ENCODE measurements at regions of chr21 and their contacts with region 1.

Region 1: DNA sequence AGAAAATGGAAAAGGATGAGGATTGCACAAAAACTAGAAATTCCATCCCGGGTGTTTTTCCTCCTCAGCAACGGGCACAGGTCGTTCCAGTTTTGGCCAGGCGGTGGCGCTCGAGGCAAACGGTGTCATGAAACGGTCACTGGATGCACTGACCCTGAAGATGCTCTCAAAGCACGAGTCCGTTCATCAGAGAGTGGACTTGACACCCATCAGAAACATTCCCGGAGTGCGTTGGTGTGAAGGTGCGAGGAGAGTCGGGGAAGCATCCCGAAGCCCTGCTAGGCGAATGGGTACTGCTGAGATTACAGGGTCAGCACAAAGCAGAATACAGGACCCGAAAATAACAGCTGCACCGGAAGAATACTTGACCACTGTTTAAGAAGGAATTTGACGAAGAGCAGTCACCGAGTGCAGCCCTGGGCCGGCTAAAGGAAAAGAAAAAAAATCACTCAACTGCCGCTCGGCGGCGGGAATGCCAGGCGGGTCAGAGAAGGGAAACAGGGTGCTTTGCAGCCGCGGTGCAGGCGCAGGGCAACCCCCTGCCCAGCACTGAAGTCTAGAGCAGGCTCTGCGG is 71.7 kb upstream of the ETS2 start:
- DNase-seq: peak; percentile 90 to 93
- ATAC-seq: peak; percentile 88 to 96 (median 94)
- H3K4me3 ChIP-seq: peak overlapping the region in 8 of 10 donors; percentile 18 to 44 (median 40)
- H3K27ac ChIP-seq: peak overlapping the region in 9 of 10 donors; percentile 47 to 90 (median 75)
- H3K4me1 ChIP-seq: peaks cover 2 to 25% (median 10%) of the 10 kb centered on the region in 9 donors
- H3K27me3 ChIP-seq: peaks cover 0 to 6% (median 0%) of the 10 kb centered on the region in 7 donors
- CTCF ChIP-seq: peak; percentile 87 to 95 (median 94)

Region 2: GRCh38 chr21:38773099-38774061 is 39.3 kb after region 1 on chr21:
- intact Hi-C with region 1: loop called in 1 of 10 experiments (anchors 5 kb)
- DNase-seq: peak in 1 of 2 donors; percentile 23
- ATAC-seq: peak in 6 of 8 donors; percentile 56 to 93 (median 62)
- H3K4me3 ChIP-seq: no peak overlapping the region
- H3K27ac ChIP-seq: peak overlapping the region in 4 of 10 donors; percentile 18 to 44 (median 26)
- H3K4me1 ChIP-seq: peaks cover 0 to 24% (median 5%) of the 10 kb centered on the region in 9 donors
- H3K27me3 ChIP-seq: no peaks in the 10 kb centered on the region
- CTCF ChIP-seq: no peak

Region 3: GRCh38 chr21:38985568-38986378 is 251.7 kb after region 1 on chr21:
- intact Hi-C with region 1: loop called in 1 of 10 experiments (anchors 10 kb)
- DNase-seq: peak; percentile 65 to 75
- ATAC-seq: peak; percentile 40 to 78 (median 66)
- H3K4me3 ChIP-seq: no peak overlapping the region
- H3K27ac ChIP-seq: peak overlapping the region; percentile 9 to 82 (median 62)
- H3K4me1 ChIP-seq: peaks cover 21 to 66% (median 64%) of the 10 kb centered on the region in 9 donors
- H3K27me3 ChIP-seq: peaks cover 0 to 5% (median 0%) of the 10 kb centered on the region in 7 donors
- CTCF ChIP-seq: no peak

Region 4: DNA sequence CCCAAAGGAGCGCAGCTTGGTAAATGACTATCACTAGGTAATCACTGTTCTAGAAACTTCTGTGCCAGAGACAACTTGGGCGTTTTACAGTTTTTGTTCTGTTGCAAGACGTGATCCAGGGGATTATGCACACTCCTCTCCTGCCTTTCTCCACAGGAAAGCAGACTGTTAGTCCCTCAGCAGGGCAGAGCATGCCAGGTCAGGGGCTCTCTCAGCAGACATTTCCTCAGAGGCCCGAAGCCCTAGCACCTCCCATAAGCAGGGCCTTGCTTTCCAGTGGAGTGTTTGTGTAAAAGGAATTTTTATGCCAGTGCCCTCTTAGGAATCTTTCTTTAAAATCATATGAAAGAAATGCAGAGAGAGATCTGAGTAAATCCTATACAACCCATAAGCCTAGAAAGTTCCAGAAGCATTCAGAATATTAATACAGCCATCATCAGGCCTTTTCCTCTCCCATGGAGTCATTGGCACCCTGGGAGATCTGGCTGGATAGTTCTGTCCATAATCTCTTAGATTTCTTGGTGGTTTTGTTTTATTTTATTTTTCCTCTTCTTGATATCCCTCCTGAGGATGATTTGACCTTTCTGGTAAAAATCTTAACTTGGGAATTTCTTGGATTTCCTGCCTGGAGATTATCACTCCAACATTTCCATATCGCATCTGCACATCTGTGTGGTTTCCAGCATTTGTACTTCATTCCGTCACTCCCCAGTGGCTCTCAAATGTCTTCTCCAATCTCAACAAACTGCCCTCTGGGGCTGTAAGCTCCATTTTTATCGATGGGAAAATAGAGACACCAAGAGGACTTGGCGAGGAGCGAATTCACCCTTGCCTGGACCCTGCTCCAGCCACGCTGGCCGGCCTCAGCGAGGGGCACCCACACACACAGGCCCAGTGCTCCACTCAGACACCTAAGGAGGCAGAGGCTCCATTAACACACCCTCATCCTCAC is 333.0 kb after region 1 on chr21:
- intact Hi-C with region 1: loop called in 3 of 10 experiments (anchors 1 to 10 kb)
- DNase-seq: peak in 1 of 2 donors; percentile 39
- ATAC-seq: peak; percentile 75 to 86 (median 81)
- H3K4me3 ChIP-seq: no peak overlapping the region
- H3K27ac ChIP-seq: peak overlapping the region; percentile 17 to 78 (median 60)
- H3K4me1 ChIP-seq: peaks cover 9 to 38% (median 23%) of the 10 kb centered on the region in 9 donors
- H3K27me3 ChIP-seq: no peaks in the 10 kb centered on the region
- CTCF ChIP-seq: peak in 5 of 9 donors; percentile 21 to 53 (median 27)

Region 5: DNA sequence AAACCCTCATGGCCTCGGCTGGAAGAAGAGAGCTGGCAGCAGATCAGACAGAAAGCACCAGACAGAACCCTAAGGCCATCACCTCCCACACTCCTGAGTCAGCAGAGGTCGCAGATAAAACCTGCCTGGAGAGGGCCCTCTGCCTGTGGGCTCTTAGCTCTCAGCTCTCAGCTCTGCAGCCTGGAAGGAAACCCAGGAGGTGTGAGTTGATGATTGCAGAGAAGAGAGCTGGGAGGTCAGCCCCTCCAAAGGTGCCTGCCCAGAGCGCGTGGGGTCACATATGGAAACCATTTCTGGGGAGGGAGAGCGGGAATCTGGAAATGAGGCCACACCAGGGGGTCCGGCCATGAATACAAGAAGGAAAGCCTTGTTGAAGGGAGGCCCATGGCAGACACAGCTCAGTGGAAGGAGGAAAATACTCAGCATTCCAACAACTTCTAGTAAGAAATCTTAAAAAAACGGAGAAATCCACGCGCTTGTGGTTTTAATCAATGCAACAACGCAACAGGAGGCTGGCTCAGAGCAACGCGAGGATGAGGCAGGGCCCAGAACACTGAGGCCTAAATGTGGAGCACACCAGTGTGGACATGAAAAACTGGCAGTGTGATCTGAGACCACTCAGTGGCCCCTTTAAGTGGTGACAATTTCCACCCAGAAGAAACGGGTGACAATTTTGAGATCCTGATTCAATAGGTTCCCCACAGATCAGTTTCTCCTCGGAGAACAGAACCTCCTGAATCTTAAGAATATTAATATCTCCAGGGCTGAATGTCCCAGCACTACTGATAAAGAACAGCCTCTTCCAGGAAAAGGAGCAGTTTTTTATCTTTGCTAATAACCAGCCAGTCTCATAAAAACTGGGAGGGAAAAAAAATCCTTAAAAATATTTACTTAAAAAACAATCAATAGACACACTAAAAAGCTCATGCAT is 403.5 kb after region 1 on chr21:
- intact Hi-C with region 1: loop called (anchors 1 to 5 kb)
- DNase-seq: no peak
- ATAC-seq: peak in 5 of 8 donors; percentile 28 to 55 (median 29)
- H3K4me3 ChIP-seq: no peak overlapping the region
- H3K27ac ChIP-seq: peak overlapping the region in 5 of 10 donors; percentile 26 to 64 (median 54)
- H3K4me1 ChIP-seq: peaks cover 0 to 17% (median 0%) of the 10 kb centered on the region in 9 donors
- H3K27me3 ChIP-seq: no peaks in the 10 kb centered on the region
- CTCF ChIP-seq: no peak